Psoas muscle (tissue), 8 donors: ENCODE measurements at regions of chr10 and their contacts with region 1.

Region 1: GRCh38 chr10:71383972-71384687 is 12.6 kb upstream of the CDH23 start:
- DNase-seq: peak; percentile 68 to 81
- ATAC-seq: peak; percentile 89 to 96 (median 90)
- H3K4me3 ChIP-seq: no peak overlapping the region
- H3K27ac ChIP-seq: no peak overlapping the region
- H3K4me1 ChIP-seq: no peaks in the 10 kb centered on the region
- H3K27me3 ChIP-seq: no peaks in the 10 kb centered on the region
- CTCF ChIP-seq: peak; percentile 89

Region 2: DNA sequence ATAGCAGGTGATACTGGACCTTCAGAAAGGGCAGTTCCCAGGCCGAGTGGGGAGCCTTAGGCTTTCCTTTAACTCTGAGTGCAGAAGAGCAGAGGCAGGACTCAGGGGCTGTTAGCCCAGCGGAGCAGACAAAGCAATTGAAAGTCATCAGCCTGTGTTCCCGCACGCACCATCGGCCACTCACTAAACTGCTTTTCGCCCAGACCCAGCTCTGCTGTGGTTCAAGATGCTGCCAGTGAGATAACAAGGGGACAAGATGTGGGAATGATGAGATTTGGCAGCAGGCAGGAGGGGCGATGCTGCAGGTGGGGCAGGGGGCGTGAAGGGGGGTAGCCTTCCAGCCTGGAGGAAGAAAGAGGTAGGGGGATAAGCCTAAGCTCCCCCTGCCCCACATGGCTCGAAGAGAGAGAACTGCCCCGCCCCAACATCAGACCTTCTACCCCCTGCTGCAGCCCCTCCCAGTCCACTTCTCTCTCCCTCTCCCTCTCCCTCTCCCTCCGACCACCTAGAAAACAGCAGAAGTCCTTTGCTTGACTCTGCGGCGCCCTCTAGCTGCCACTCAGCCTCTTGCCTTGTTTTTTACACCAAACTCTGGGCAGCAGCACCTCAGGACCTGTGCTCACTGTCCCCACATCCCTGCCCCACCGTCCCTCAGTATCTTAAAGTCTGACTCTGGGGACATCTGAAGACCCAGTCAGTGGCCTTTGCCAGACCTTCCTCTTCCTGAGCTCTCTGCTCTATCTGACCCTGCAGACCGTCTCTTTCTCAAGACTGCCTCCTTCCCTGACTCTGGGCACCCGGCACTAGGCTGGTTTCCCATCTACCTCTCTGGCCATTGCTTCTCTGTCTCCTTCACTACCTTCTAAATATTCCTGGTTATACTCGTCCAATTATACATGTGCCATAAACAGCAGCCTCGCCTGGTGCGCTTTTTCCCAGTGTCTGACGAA is 225.0 kb after region 1 on chr10:
- intact Hi-C with region 1: loop called in 1 of 2 experiments (anchors 10 kb)
- DNase-seq: peak; percentile 82 to 90
- ATAC-seq: peak; percentile 29 to 60 (median 42)
- H3K4me3 ChIP-seq: no peak overlapping the region
- H3K27ac ChIP-seq: no peak overlapping the region
- H3K4me1 ChIP-seq: peaks cover 19% of the 10 kb centered on the region
- H3K27me3 ChIP-seq: no peaks in the 10 kb centered on the region
- CTCF ChIP-seq: peak; percentile 63

Region 3: GRCh38 chr10:71647526-71648253 is 263.6 kb after region 1 on chr10:
- intact Hi-C with region 1: no loop called
- DNase-seq: no peak
- ATAC-seq: peak in 3 of 4 donors; percentile 14 to 59 (median 54)
- H3K4me3 ChIP-seq: no peak overlapping the region
- H3K27ac ChIP-seq: no peak overlapping the region
- H3K4me1 ChIP-seq: no peaks in the 10 kb centered on the region
- H3K27me3 ChIP-seq: no peaks in the 10 kb centered on the region
- CTCF ChIP-seq: peak; percentile 36

Region 4: DNA sequence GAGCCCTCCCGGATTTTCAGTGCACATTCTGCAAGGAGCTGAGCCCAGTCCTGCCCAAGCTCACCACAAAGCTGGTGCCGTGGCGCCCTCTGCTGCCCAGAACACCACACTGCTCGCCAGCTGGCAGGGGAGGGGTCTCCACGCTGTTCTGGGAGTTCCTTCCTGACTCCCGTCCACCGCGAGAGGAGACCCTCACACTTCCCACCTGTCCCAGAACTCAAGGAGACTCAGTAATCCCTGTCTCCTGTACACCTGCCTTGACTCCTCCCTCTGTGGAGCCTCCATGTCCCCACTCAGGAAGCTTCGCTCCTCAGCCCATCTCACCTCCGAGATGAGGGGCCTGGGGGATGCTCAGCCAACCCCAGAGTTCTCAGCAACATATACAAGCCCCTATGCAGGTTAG is 324.2 kb after region 1 on chr10:
- intact Hi-C with region 1: loop called in 1 of 2 experiments (anchors 5 kb)
- DNase-seq: peak in 1 of 2 donors; percentile 75
- ATAC-seq: peak; percentile 57 to 77 (median 66)
- H3K4me3 ChIP-seq: no peak overlapping the region
- H3K27ac ChIP-seq: no peak overlapping the region
- H3K4me1 ChIP-seq: peaks cover 3% of the 10 kb centered on the region
- H3K27me3 ChIP-seq: no peaks in the 10 kb centered on the region
- CTCF ChIP-seq: peak; percentile 78

Region 5: DNA sequence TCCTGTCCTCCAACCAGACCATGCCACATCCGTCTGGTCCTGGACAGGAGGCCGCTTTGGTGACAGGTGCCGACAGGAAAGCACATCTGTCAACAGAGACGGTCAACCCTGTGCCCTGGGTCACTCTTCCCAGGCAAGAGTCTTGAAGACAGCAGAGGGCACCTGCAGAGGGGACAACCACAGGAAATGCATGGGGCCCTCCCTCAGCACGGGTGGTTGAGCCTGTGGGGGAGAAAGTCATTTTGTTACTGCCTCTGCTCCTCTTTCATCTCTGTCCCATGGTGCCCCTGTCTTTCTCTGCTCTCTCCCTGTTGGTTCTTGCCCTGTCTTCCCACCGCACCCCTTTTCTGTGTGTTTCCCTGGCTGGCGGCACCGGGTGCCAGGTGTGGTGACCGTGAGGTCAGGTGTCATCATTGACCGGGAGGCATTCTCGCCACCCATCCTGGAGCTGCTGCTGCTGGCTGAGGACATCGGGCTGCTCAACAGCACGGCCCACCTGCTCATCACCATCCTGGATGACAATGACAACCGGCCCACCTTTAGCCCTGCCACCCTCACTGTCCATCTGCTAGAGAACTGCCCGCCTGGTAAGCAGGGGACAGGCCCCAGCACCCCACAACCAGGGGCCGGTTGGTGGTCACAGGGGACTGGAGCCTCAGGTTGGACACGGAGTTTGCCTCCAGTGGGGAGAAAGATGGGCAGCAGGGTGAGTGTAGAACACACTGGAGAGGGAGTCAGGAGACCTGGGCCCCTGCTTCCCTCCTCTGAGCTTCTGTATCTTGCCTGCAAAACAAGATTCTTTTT is 406.8 kb after region 1 on chr10:
- intact Hi-C with region 1: no loop called
- DNase-seq: peak in 1 of 2 donors; percentile 39
- ATAC-seq: no peak
- H3K4me3 ChIP-seq: no peak overlapping the region
- H3K27ac ChIP-seq: no peak overlapping the region
- H3K4me1 ChIP-seq: no peaks in the 10 kb centered on the region
- H3K27me3 ChIP-seq: no peaks in the 10 kb centered on the region
- CTCF ChIP-seq: no peak

Region 6: DNA sequence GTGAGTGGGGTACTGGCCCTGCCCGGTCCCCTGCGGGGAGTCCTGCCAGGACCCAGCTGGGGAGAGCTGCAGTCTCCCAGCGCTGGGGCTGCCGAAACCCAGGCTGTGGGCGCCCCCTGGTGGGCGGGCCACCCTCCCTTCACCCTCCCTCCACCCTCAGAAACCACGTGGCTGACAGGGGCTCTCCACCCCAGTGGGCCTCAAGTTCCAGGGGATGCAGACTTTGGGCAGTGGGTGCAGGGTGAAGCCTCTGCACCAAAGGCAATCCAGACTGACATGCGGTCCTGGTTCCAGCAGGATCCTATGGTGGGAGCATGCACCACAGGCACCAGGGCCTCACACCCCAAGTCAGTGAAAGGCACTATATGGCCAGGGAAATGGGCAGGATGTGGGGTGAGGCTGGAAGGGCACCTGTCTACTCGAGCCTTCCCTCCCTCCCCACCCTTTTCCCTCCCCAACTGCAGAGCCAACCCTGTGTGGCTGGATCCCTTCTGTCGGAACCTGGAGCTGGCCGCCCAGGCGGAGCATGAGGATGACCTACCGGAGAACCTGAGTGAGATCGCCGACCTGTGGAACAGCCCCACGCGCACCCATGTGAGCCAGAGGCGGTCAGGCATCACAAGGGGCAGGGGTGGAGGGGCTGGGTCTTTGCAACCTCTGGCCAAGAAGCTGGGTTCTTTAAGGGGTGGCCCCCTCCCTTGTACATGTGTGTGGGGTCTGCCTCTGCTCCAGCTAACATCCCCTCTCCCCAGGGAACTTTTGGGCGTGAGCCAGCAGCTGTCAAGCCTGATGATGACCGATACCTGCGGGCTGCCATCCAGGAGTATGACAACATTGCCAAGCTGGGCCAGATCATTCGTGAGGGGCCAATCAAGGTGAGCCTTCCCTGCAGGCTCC is 428.1 kb after region 1 on chr10:
- intact Hi-C with region 1: loop called (anchors 5 kb)
- DNase-seq: peak; percentile 72 to 87
- ATAC-seq: peak; percentile 66 to 83 (median 75)
- H3K4me3 ChIP-seq: no peak overlapping the region
- H3K27ac ChIP-seq: no peak overlapping the region
- H3K4me1 ChIP-seq: peaks cover 7% of the 10 kb centered on the region
- H3K27me3 ChIP-seq: no peaks in the 10 kb centered on the region
- CTCF ChIP-seq: peak; percentile 79

Region 7: GRCh38 chr10:71893920-71894319 is 509.8 kb after region 1 on chr10:
- intact Hi-C with region 1: loop called in 1 of 2 experiments (anchors 5 kb)
- DNase-seq: no peak
- ATAC-seq: no peak
- H3K4me3 ChIP-seq: no peak overlapping the region
- H3K27ac ChIP-seq: no peak overlapping the region
- H3K4me1 ChIP-seq: peaks cover 5% of the 10 kb centered on the region
- H3K27me3 ChIP-seq: no peaks in the 10 kb centered on the region
- CTCF ChIP-seq: no peak